ENCODE measurements at regions of chr1 and their contacts with region 1.

Region 1: DNA sequence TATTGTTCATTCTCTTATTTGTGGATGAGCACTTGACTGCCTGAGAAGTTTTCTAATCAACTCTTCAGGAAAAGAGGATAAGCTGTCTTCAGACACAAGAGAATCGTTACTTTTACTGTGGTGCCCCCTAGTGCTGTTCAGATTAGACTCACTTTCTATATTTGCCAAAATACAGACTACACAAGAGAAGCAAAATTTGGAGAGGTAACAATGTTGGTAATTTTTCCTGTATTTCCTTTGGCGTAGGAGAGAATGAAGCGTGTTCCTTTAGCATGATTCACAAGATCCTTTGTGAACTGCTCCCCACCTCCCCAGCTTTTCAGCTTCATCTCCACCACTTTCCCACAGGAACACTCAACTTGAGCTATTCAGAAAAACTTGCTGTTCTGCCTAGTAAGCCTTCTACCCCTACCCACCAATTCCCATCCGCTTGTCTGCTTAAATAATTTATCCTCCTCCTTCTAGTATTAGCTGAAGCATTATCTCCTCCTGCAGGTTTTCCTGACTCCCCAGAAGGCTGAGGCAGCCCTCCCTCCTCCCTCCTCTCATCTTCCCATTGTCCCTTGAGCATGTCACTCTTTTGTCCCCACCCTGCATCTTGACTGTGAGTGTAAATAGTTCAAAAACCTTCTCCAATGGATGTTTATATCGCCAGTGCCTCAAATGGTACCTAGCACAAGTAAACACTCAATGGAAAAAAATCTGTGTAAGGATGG is 4.5 kb downstream of the TNFSF4 start:
- DNase-seq: peak; percentile 69
- H3K4me3 ChIP-seq: no peak overlapping the region
- CTCF ChIP-seq: peak; percentile 56

Region 2: DNA sequence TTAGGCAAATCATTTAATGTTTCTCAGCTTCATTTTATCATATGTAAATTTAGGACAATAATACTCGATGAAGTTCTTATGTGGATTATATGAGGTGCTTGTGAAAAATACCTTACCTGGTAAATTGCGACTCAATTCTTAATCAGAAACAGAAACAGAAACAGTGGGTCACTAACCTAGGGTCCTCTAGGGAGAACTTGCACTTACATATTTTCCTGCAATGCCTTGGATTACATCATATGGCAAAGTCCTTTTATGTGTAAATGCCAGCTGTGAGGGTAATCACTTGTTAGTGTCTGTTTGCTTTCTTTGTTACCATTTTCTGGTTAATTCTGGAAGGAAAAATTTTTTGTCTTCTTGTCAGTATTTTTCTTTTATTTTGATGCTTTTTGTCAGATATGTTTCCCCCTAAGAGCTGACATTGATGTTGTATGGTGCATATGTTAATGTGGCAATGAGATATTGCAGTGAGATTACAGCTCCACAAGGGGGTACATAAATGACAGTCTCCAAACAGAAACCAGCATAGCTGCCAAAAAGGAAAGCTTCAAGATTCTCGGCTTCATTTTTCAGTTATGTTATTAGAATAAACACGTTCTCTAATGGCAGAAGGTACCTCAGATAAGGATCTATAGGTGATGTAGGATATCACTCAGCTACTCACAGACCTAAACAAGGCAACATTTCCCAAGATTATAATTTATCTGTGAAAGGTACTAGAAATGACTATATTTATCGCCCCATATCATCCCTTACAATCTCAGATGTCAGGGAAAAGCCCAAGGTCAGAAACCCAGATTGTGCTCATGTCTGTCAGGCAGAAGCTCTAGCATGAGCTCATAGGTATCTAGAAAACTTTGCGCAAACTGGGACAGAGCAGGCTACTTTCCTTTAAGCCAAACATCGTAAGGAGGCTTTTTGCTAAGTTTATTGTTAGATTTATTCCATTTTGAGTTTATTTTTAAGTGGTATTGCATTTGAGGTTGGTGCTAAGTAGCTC is 423.8 kb before region 1 on chr1:
- CTCF ChIA-PET with region 1: interaction called, 11 read pairs
- POLR2A ChIA-PET with region 1: no interaction called
- DNase-seq: no peak
- H3K4me3 ChIP-seq: no peak overlapping the region
- CTCF ChIP-seq: no peak

Region 3: GRCh38 chr1:172826096-172826743 is 376.4 kb before region 1 on chr1:
- CTCF ChIA-PET with region 1: interaction called, 111 read pairs
- POLR2A ChIA-PET with region 1: interaction called, 7 read pairs
- DNase-seq: peak; percentile 71
- H3K4me3 ChIP-seq: no peak overlapping the region
- CTCF ChIP-seq: peak; percentile 58

Region 4: DNA sequence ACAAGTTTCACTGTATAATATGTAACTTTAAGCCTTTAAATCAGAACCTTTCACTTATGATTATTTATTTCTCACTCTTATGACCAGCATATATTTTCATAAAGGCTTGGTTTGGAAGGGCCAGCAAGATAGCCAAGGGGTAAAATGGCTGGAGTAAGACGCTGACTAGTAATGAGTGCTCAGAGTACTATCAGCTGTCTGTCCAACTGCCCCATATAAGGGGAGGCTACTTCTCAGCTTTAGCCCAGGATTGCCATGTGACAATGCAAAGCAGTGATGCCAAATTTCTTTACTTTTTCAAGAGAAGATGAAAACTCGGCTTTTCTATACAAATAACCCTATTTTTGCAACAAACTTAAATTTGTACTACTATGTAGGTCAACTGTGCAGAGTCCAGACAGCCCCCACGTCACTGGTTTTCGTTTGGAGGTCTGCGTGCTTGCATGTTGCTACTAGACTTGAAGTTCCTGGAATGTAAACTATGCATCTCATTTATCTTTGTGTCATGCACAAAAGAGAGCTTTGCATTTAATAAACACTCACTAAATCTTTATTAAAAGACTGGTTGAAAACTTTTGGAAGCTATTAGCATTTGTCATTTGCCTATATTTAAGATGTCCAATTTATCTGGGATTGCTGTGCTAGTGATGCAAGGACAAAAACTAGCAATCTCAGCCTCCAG is 262.3 kb before region 1 on chr1:
- CTCF ChIA-PET with region 1: interaction called, 13 read pairs
- POLR2A ChIA-PET with region 1: interaction called, 3 read pairs
- DNase-seq: no peak
- H3K4me3 ChIP-seq: no peak overlapping the region
- CTCF ChIP-seq: no peak

Region 5: GRCh38 chr1:172955161-172955815 is 247.3 kb before region 1 on chr1:
- CTCF ChIA-PET with region 1: interaction called, 15 read pairs
- POLR2A ChIA-PET with region 1: interaction called, 3 read pairs
- DNase-seq: peak; percentile 87
- H3K4me3 ChIP-seq: no peak overlapping the region
- CTCF ChIP-seq: no peak

Region 6: GRCh38 chr1:173212952-173213491 is 10.4 kb after region 1 on chr1:
- CTCF ChIA-PET with region 1: interaction called, 16 read pairs
- POLR2A ChIA-PET with region 1: no interaction called
- DNase-seq: no peak
- H3K4me3 ChIP-seq: no peak overlapping the region
- CTCF ChIP-seq: no peak

Region 7: GRCh38 chr1:173255214-173255813 is 52.7 kb after region 1 on chr1:
- CTCF ChIA-PET with region 1: interaction called, 22 read pairs
- POLR2A ChIA-PET with region 1: no interaction called
- DNase-seq: no peak
- H3K4me3 ChIP-seq: no peak overlapping the region
- CTCF ChIP-seq: peak; percentile 63